Mammary epithelial cell (primary cell): ENCODE measurements at regions of chr3 and their contacts with region 1.

Region 1: GRCh38 chr3:134373994-134374790 is at the start of gene AMOTL2:
- DNase-seq: peak; percentile 94
- H3K4me3 ChIP-seq: peak within 1 kb of the TSS; percentile 76 to 84 (median 79)
- H3K27ac ChIP-seq: peak within 1 kb of the TSS; percentile 80
- H3K4me1 ChIP-seq: peaks cover 60% of the 10 kb centered on the region
- H3K27me3 ChIP-seq: no peaks in the 10 kb centered on the region
- CTCF ChIP-seq: no peak
- total RNA-seq, gene AMOTL2: 116 to 144 TPM

Region 2: DNA sequence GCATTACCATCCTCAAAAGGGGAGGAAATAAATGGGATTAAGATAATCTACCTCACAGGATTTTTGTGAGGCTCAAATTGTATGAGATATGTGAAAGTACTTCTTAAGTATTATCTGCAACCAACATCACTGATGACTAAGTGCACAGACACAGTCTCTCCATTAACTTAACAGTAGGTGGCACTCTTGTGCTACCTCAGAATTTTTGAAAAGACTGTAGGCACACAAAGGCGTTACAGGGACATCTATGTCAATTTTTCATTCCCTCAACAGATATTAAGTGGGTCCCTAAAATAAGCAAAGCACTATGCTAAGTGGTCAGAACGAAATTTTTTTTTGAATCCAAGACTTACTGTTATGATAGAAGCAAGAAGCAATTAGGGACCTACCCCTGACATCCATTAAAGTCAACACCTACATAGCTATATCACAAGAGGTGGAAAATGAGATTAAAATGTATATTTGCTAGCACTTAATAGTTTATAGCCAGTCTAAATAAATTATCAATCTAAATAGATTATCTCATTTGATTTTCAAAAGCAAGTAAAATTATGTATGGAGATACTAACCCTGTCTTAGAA is 176.4 kb before region 1 on chr3:
- CTCF ChIA-PET with region 1: no interaction called
- dilution Hi-C with region 1: no loop called
- in situ Hi-C with region 1: no loop called
- intact Hi-C with region 1: loop called (anchors 5 kb)
- DNase-seq: peak; percentile 68
- H3K4me3 ChIP-seq: no peak overlapping the region
- H3K27ac ChIP-seq: no peak overlapping the region
- H3K4me1 ChIP-seq: peaks cover 50% of the 10 kb centered on the region
- H3K27me3 ChIP-seq: no peaks in the 10 kb centered on the region
- CTCF ChIP-seq: peak; percentile 71 to 76

Region 3: GRCh38 chr3:134326760-134327593 is 47.2 kb before region 1 on chr3:
- CTCF ChIA-PET with region 1: no interaction called
- dilution Hi-C with region 1: no loop called
- in situ Hi-C with region 1: no loop called
- intact Hi-C with region 1: loop called (anchors 1 kb)
- DNase-seq: peak; percentile 86
- H3K4me3 ChIP-seq: peak overlapping the region in 1 of 3 experiments; percentile 6
- H3K27ac ChIP-seq: peak overlapping the region; percentile 84
- H3K4me1 ChIP-seq: peaks cover 75% of the 10 kb centered on the region
- H3K27me3 ChIP-seq: no peaks in the 10 kb centered on the region
- CTCF ChIP-seq: no peak

Region 4: GRCh38 chr3:134427400-134428145 is 53.4 kb after region 1 on chr3:
- CTCF ChIA-PET with region 1: no interaction called
- dilution Hi-C with region 1: no loop called
- in situ Hi-C with region 1: loop called in 1 of 2 experiments (anchors 5 kb)
- intact Hi-C with region 1: no loop called
- DNase-seq: peak; percentile 97
- H3K4me3 ChIP-seq: no peak overlapping the region
- H3K27ac ChIP-seq: peak overlapping the region; percentile 45
- H3K4me1 ChIP-seq: peaks cover 24% of the 10 kb centered on the region
- H3K27me3 ChIP-seq: no peaks in the 10 kb centered on the region
- CTCF ChIP-seq: no peak

Region 5: GRCh38 chr3:134473868-134474546 is 99.8 kb after region 1 on chr3:
- CTCF ChIA-PET with region 1: no interaction called
- dilution Hi-C with region 1: no loop called
- in situ Hi-C with region 1: loop called (anchors 5 to 10 kb)
- intact Hi-C with region 1: loop called (anchors 1 kb)
- DNase-seq: peak; percentile 82
- H3K4me3 ChIP-seq: no peak overlapping the region
- H3K27ac ChIP-seq: peak overlapping the region; percentile 49
- H3K4me1 ChIP-seq: peaks cover 58% of the 10 kb centered on the region
- H3K27me3 ChIP-seq: no peaks in the 10 kb centered on the region
- CTCF ChIP-seq: peak; percentile 60 to 70